Naive thymus-derived CD4-positive, alpha-beta T cell (primary cell): ENCODE measurements at regions of chr11 and their contacts with region 1.

Region 1: DNA sequence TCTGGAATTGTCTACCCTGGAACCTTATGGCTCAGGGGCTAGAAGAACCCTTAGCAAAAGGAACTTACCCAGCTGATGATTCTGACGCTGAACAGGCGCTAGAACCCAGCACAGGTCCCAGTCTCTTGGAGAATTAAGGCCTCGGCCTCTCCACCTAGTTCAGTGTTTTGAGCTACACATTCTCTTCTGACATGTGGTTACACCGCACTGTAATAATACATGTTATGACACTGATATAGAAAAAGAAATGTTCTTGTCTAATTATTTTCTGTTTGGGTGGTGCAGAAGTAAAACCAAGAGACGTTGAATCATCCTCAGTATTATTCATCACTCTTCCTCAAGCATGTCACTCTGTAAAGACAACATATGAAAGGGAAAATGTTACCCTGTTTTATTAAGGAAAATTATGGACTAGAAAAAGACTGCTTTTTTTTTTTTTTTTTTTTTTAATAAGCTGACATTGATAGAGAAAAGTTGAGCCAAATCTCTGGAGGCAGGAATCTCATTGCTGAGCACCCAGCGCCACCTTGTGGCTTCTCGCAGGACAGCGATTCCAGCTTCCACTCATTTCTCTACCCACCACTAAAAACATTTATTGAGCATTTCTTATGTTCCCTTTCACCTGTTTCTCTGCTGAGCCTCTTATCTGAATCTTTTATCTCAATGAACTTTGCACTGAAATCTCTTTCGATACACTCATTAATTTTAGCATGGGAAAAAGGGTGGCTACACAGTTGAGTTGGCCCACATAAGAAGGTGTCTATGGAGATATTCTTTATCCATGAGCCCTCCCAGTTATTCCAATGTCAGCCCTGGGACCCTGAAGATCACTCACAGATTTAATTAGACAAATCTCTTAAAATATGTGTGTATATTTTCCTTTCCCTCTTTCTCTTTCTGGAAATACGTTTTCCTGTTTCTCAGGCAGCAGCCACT is 12.6 kb upstream of the APLNR start:
- DNase-seq: peak in 4 of 9 donors; percentile 17 to 38 (median 22)
- ATAC-seq: no peak
- H3K4me3 ChIP-seq: no peak overlapping the region
- H3K4me3 Mint-ChIP-seq: no peak overlapping the region
- H3K27ac ChIP-seq: no peak overlapping the region
- H3K27ac Mint-ChIP-seq: no peak overlapping the region
- H3K4me1 ChIP-seq: no peaks in the 10 kb centered on the region
- H3K4me1 Mint-ChIP-seq: peaks cover 3 to 9% (median 5%) of the 10 kb centered on the region in 7 donors
- H3K27me3 ChIP-seq: no peaks in the 10 kb centered on the region
- H3K27me3 Mint-ChIP-seq: peaks cover 7 to 45% (median 40%) of the 10 kb centered on the region in 5 donors

Region 2: GRCh38 chr11:57001674-57002401 is 247.8 kb before region 1 on chr11:
- CTCF ChIA-PET with region 1: no interaction called
- POLR2A ChIA-PET with region 1: no interaction called
- intact Hi-C with region 1: loop called in 1 of 2 experiments (anchors 5 kb)
- DNase-seq: no peak
- ATAC-seq: no peak
- H3K4me3 ChIP-seq: no peak overlapping the region
- H3K4me3 Mint-ChIP-seq: no peak overlapping the region
- H3K27ac ChIP-seq: no peak overlapping the region
- H3K27ac Mint-ChIP-seq: no peak overlapping the region
- H3K4me1 ChIP-seq: no peaks in the 10 kb centered on the region
- H3K4me1 Mint-ChIP-seq: no peaks in the 10 kb centered on the region
- H3K27me3 ChIP-seq: no peaks in the 10 kb centered on the region
- H3K27me3 Mint-ChIP-seq: no peaks in the 10 kb centered on the region

Region 3: GRCh38 chr11:57116654-57117053 is 133.0 kb before region 1 on chr11:
- CTCF ChIA-PET with region 1: no interaction called
- POLR2A ChIA-PET with region 1: no interaction called
- intact Hi-C with region 1: loop called in 1 of 2 experiments (anchors 1 kb)
- DNase-seq: peak in 1 of 9 donors; percentile 1
- ATAC-seq: no peak
- H3K4me3 ChIP-seq: no peak overlapping the region
- H3K4me3 Mint-ChIP-seq: no peak overlapping the region
- H3K27ac ChIP-seq: no peak overlapping the region
- H3K27ac Mint-ChIP-seq: no peak overlapping the region
- H3K4me1 ChIP-seq: no peaks in the 10 kb centered on the region
- H3K4me1 Mint-ChIP-seq: no peaks in the 10 kb centered on the region
- H3K27me3 ChIP-seq: peaks cover 0 to 3% of the 10 kb centered on the region in 2 donors
- H3K27me3 Mint-ChIP-seq: peaks cover 0 to 29% (median 25%) of the 10 kb centered on the region in 5 donors